H1 (cell line): ENCODE measurements at regions of chr17 and their contacts with region 1.

Region 1: DNA sequence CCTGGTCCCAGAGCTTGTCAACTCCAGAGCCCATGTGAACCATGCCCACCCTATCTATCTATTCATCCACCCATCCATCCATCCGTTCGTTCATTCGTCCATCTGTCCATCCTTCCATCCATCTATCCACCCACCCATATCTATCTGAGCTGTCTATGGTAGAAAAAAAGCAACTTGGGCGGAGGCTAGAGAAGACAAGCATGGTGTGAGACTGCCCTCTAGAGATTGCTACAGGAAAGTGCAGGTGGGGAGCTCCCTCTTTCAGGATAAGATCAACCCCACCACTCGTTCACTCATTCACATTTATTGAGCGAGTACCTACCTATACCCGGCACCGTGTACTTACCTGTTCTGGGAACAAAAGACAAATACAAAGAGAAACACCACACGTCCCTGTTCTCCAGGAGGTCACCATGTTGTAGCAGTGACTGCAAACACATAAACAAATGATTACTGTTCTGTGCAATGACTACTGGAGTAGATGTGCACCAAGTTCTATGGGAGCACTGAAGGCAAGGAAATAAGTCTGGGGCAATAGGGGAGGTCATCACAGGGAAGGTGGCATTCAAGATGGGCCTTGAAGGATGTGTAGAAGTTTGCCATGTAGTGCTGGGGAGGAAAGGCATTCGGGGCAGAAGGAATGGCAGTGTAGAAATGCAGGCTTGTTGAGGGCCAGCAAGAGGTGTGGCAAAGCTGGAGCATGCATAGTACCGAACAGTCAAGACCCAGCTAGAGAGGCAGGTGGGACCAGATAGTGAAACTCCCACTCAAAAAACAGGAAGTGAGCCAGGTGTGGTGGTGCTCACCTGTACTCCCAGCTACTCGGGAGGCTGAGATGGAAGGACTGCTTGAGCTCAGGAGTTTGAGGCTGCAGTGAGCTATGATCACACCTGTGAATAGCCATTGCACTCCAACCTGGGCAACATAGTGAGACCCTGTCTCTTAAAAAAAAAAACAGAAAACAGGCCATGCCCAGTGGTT is 13.4 kb upstream of the ATP5MC1 start:
- DNase-seq: peak in 1 of 2 experiments; percentile 61
- H3K4me3 ChIP-seq: no peak overlapping the region
- H3K27ac ChIP-seq: no peak overlapping the region
- H3K4me1 ChIP-seq: no peaks in the 10 kb centered on the region
- H3K27me3 ChIP-seq: no peaks in the 10 kb centered on the region; a peak in 1 of 7 replicates
- CTCF ChIP-seq: peak; percentile 59 to 99 (median 91)
- EP300 ChIP-seq: no peak
- POLR2A ChIP-seq: no peak
- RAD21 ChIP-seq: peak; percentile 98 to 99

Region 2: DNA sequence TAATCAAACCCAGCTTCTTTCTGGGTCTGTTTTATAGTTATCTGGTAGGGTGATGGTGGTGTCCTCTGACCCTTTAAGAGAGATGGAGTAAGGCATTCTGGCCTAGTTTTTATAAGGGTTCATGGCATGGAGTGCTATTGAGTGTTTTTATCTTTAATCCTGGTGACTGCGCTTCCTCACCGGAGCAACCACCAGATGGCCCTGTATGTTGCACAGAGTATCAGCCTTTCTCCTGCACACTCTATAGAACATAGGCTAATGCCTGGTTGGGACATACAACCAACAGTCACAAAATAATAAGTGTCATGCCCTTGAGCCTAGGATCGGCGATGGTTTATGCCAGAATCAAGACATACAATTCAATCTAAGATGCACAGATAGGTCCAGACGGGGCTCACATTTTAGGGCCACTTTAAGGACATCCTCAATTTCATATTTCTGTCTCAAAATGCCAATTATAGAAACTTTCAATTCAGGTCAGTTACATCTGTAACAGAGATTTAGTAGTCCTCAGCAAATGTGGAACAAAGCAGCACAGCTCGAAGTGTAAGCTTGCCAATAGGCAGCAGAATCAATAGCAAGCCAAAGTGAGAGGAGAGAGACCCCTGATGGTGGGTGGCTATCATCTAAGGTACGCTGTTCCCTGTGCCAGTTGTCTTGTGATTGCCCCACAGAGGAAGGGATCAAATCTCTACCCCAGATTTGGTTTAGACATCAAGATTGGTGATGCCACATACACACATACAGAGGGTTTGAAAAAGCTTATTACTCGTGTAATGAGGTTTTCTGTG is 215.9 kb before region 1 on chr17:
- CTCF ChIA-PET with region 1: interaction called, 16 read pairs
- POLR2A ChIA-PET with region 1: interaction called, 6 read pairs
- DNase-seq: no peak
- H3K4me3 ChIP-seq: no peak overlapping the region
- H3K27ac ChIP-seq: no peak overlapping the region
- H3K4me1 ChIP-seq: no peaks in the 10 kb centered on the region
- H3K27me3 ChIP-seq: peaks cover 0 to 5% (median 0%) of the 10 kb centered on the region in 4 experiments; a peak in 1 of 7 replicates
- CTCF ChIP-seq: peak; percentile 26 to 40 (median 32); a peak in 3 of 4 replicates
- EP300 ChIP-seq: no peak
- POLR2A ChIP-seq: no peak
- RAD21 ChIP-seq: peak in 1 of 2 experiments; percentile 41; a peak in 1 of 4 replicates

Region 3: GRCh38 chr17:48747445-48748363 is 131.5 kb before region 1 on chr17:
- CTCF ChIA-PET with region 1: interaction called, 11 read pairs
- POLR2A ChIA-PET with region 1: no interaction called
- DNase-seq: peak in 1 of 2 experiments; percentile 64
- H3K4me3 ChIP-seq: peak overlapping the region in 1 of 4 experiments; percentile 10; a peak in 1 of 8 replicates
- H3K27ac ChIP-seq: no peak overlapping the region
- H3K4me1 ChIP-seq: peaks cover 3 to 7% (median 5%) of the 10 kb centered on the region in 4 experiments
- H3K27me3 ChIP-seq: peaks cover 93 to 100% (median 98%) of the 10 kb centered on the region in 4 experiments
- CTCF ChIP-seq: no peak
- EP300 ChIP-seq: no peak
- POLR2A ChIP-seq: no peak
- RAD21 ChIP-seq: no peak

Region 4: GRCh38 chr17:48791128-48792032 is 87.8 kb before region 1 on chr17:
- CTCF ChIA-PET with region 1: interaction called, 2,590 read pairs
- POLR2A ChIA-PET with region 1: no interaction called
- DNase-seq: peak; percentile 70 to 85
- H3K4me3 ChIP-seq: no peak overlapping the region
- H3K27ac ChIP-seq: no peak overlapping the region
- H3K4me1 ChIP-seq: peaks cover 0 to 3% (median 0%) of the 10 kb centered on the region in 4 experiments; a peak in 2 of 7 replicates
- H3K27me3 ChIP-seq: peaks cover 0 to 6% (median 1%) of the 10 kb centered on the region in 4 experiments; a peak in 2 of 7 replicates
- CTCF ChIP-seq: peak; percentile 61 to 94 (median 81)
- EP300 ChIP-seq: no peak
- POLR2A ChIP-seq: no peak
- RAD21 ChIP-seq: peak; percentile 84 to 88

Region 5: DNA sequence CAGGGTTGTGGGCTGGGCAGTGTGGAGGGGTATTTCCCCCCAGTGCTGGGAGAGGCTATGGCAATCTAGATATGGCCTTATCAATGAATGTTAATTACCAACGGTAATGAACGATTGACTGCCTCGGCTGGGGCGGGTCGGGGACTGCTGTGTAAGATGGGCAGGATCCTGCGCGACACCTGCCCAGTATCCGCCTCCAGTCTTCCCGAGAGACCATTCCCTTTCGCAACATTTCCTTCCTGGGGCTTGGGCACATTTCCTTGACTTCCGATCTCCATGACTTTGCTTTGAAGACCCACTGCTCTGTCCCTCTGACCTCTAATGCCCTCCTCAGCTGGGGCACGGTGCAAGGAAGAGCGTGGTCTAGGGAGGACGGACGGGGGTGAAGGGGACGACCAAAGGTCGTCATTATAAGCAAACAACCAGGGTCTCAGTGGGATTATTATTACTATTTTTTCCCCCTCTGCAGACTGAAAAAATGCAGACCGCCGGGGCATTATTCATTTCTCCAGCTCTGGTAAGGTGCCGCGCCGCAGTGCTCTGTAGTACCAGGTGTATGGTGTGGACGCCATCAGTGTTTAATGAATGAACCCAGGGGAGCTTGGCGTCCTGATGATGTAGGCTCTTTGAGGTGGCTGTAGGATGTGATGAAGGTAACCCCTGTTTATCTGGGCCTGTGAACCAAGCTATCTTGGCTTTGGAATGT is 13.9 kb after region 1 on chr17:
- CTCF ChIA-PET with region 1: interaction called, 2,590 read pairs
- POLR2A ChIA-PET with region 1: interaction called, 3 read pairs
- DNase-seq: no peak
- H3K4me3 ChIP-seq: peak overlapping the region; percentile 90 to 95 (median 94)
- H3K27ac ChIP-seq: peak overlapping the region; percentile 33; the same call in 1 of the 2 replicates
- H3K4me1 ChIP-seq: peaks cover 0 to 6% (median 3%) of the 10 kb centered on the region in 4 experiments; a peak in 3 of 7 replicates
- H3K27me3 ChIP-seq: no peaks in the 10 kb centered on the region
- CTCF ChIP-seq: no peak
- EP300 ChIP-seq: no peak
- POLR2A ChIP-seq: peak in 1 of 2 experiments; percentile 57; a peak in 1 of 3 replicates
- RAD21 ChIP-seq: no peak